ENCODE measurements at regions of chr1 and their contacts with region 1.

Region 1: GRCh38 chr1:12019858-12020509 is 686 bp downstream of the MIIP start:
- DNase-seq: peak; percentile 49
- ATAC-seq: peak; percentile 7
- H3K4me3 Mint-ChIP-seq: peak overlapping the region; percentile 75
- H3K27ac Mint-ChIP-seq: peak overlapping the region; percentile 76
- H3K4me1 Mint-ChIP-seq: peaks cover 22% of the 10 kb centered on the region
- H3K27me3 Mint-ChIP-seq: no peaks in the 10 kb centered on the region

Region 2: GRCh38 chr1:11858968-11859871 is 160.8 kb before region 1 on chr1:
- CTCF ChIA-PET with region 1: no interaction called
- DNase-seq: peak; percentile 82
- ATAC-seq: peak; percentile 88
- H3K4me3 Mint-ChIP-seq: no peak overlapping the region
- H3K27ac Mint-ChIP-seq: no peak overlapping the region
- H3K4me1 Mint-ChIP-seq: peaks cover 2% of the 10 kb centered on the region
- H3K27me3 Mint-ChIP-seq: peaks cover 71% of the 10 kb centered on the region

Region 3: DNA sequence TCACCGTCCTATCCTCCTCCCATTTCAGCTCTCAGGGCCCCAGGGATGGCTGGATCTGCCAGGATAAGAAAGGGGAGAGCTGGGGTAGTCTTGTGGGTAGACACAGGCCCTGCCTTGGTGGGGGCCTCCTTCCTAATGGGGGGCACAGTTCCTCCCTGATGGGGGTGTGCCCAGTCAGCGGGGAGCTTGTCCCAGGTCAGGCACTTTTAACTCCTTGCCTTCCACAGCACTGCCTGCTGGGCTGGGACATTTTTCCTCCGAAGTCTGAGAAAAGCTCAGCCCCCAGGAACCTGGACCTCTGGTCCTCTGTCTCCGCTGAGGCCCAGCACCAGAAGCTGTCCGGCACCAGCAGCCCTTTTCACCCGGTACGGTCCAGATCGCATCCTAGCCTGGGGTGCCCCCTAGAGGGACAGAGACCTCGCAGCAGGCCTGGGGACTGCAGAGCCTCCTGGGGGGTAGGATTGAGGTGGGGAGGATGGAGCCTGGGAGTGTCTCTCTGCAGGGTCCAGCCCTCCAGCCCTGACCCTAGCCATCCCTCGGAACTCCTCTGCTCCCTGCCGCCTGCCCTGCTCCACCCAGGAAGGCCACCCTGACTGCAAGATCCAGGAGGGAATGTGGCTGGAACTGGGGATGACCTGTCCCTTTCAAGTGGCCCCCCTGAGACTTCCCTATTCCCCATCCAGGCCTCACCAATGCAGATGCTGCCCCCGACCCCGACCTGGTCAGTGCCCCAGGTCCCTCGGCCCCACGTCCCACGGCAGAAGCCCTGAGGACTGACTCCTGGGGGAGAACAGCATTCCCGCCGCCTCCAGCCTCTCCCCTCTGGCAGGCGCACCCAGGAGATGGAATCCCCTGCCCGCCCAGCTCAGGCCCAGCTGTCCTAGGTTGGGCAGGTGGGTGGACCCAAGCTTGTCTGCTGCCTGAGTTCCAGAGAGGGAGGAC is 11.3 kb after region 1 on chr1:
- CTCF ChIA-PET with region 1: interaction called, 29 read pairs
- DNase-seq: peak; percentile 68
- ATAC-seq: peak; percentile 79
- H3K4me3 Mint-ChIP-seq: no peak overlapping the region
- H3K27ac Mint-ChIP-seq: no peak overlapping the region
- H3K4me1 Mint-ChIP-seq: peaks cover 2% of the 10 kb centered on the region
- H3K27me3 Mint-ChIP-seq: no peaks in the 10 kb centered on the region

Measured in activated CD8-positive, alpha-beta memory T cell treated with anti-CD3 and anti-CD28 coated beads, Interleukin-2, amount 10 ng/mL, durations not matched to agents 7 days and 5 days (primary cell).